ENCODE measurements at regions of chr10 and their contacts with region 1.

Region 1: DNA sequence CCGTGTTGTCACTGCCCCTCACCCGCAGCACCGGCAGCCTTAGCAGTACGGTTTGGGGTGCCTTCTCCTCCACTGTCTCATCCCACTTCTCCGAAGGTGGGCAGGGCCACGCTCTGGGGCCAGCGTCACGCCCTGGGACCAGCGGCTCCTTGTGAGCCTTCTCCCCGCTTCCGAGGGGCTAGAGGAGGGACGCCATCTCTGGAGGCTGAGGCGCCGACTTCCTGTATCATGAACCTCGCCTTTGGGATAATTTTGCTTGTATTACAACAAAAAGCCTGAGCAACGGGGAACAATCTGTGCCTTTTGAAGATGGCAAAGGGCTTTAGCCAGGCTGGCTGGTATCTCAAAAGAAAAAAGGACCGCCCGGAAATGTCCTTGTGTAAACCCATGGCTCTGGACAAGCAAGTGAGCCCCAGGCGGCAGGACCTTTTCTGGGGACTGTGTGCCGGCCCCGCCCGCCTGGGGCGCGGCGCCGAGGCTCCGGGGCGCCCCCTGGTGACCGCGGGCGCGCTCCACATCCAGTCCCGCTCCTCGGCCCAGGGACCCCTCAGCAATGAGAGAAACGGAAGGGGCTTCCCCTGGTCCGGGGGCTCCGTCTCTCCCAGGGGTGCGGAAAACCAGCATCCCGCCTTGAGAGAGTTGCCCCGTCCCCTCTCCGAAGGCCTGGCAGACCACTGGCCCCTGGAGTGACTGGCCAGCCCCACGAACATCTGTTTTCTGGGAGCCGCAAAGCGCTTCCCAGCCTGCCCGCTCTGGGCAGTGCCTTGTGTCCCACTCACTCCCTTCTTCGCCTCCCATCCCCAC is 3.8 kb downstream of the DEPP1 start:
- DNase-seq: peak; percentile 62
- H3K4me3 Mint-ChIP-seq: peak overlapping the region; percentile 49
- H3K27ac Mint-ChIP-seq: peak overlapping the region; percentile 65
- H3K4me1 Mint-ChIP-seq: peaks cover 20% of the 10 kb centered on the region
- H3K27me3 Mint-ChIP-seq: no peaks in the 10 kb centered on the region

Region 2: DNA sequence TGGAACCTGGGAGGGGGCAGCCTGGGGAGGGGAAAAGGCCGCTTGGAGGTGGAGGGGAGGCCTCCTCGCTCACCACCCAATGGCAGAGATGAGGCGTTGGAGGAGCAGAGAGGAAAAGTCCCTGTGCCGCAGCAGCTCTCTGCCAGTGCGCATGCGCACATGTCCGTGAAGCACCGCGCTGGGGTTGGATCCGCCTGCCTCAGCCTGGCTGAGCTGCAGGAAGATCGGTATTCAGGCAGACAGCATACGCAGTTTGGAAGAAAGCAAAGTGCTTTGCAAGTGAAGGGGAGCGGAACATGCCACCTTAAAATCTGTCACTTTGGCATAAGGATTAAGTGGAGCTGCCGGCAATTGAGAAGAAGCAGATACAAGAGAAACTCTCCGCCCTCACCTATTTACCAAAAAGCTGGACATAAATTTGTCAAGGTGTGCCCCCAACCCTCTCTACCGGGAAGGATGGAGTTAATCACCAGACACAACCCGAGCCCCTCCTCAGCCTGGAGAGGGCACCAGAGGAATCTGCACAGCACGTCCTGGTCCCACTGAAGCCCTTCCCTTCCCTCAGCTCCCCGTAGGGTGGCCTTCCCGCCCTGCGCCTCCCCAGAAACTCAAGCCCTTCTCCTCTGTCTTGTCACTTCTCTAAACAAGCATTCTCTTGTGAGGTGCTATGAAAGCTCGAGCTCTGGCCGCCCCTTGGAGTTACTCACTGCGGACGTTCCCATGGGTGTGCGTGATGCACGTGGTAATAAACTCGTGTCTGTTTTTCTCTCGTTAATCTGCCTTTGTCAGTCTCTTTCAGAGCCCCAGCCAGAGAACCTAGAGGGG is 95.9 kb before region 1 on chr10:
- CTCF ChIA-PET with region 1: no interaction called
- intact Hi-C with region 1: loop called (anchors 2 kb)
- DNase-seq: peak; percentile 89
- H3K4me3 Mint-ChIP-seq: peak overlapping the region; percentile 80
- H3K27ac Mint-ChIP-seq: peak overlapping the region; percentile 48
- H3K4me1 Mint-ChIP-seq: peaks cover 9% of the 10 kb centered on the region
- H3K27me3 Mint-ChIP-seq: peaks cover 2% of the 10 kb centered on the region

Region 3: GRCh38 chr10:44913350-44914081 is 61.3 kb before region 1 on chr10:
- CTCF ChIA-PET with region 1: no interaction called
- intact Hi-C with region 1: loop called (anchors 10 kb)
- DNase-seq: peak; percentile 52
- H3K4me3 Mint-ChIP-seq: peak overlapping the region; percentile 20
- H3K27ac Mint-ChIP-seq: peak overlapping the region; percentile 77
- H3K4me1 Mint-ChIP-seq: peaks cover 16% of the 10 kb centered on the region
- H3K27me3 Mint-ChIP-seq: no peaks in the 10 kb centered on the region

Region 4: GRCh38 chr10:44947371-44948152 is 27.3 kb before region 1 on chr10:
- CTCF ChIA-PET with region 1: no interaction called
- intact Hi-C with region 1: no loop called
- DNase-seq: no peak
- H3K4me3 Mint-ChIP-seq: no peak overlapping the region
- H3K27ac Mint-ChIP-seq: no peak overlapping the region
- H3K4me1 Mint-ChIP-seq: no peaks in the 10 kb centered on the region
- H3K27me3 Mint-ChIP-seq: peaks cover 4% of the 10 kb centered on the region

Region 5: DNA sequence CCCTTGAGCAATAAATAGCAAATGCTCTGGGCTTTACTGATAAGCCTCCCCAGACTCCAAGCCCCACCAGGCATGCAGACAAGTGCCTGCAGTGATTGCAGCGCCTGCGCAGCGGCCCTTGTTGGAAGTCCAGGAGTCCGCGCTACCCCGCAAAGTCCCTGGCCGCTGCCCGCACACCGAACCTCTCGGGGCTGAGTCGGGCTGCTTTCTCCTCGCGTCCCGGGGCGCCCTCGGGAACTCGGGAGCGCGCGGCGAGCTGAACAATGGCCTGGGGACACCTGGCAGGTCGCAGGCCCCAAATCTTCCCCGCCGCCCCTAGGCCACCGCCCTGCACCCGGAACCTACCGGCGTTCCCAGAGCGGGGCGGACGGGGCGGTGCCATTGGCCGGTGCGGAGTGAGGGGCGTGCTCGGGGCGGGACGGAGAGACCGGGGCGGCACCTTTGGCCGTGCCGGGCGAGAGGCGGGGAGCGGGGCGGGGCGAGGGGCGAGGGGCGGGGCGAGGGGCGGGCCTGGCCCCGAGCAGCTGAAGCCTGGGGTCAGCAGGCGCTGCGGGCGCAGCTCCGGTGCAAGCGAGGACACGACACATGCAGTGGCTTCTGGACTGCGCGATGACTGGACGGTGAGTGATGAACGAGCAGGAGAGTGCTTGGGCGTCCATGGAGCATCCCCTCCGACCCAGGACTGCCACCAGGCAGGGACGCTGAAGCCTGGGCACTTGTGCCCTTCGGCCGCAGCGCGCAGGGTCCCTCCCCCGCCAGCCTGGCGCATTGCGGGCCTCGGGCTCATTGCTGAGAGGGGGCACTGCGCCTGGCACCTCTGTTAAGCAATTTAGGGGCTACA is 15.4 kb before region 1 on chr10 and contains the start of gene RASSF4:
- CTCF ChIA-PET with region 1: interaction called, 3 read pairs
- intact Hi-C with region 1: loop called (anchors 1 kb)
- DNase-seq: peak; percentile 94
- H3K4me3 Mint-ChIP-seq: peak within 1 kb of the TSS; percentile 80
- H3K27ac Mint-ChIP-seq: peak within 1 kb of the TSS; percentile 48
- H3K4me1 Mint-ChIP-seq: peaks cover 18% of the 10 kb centered on the region
- H3K27me3 Mint-ChIP-seq: no peaks in the 10 kb centered on the region
- total RNA-seq, gene RASSF4: 1.1 to 2.2 TPM

Region 6: GRCh38 chr10:45000752-45001380 is 26.0 kb after region 1 on chr10 and contains the start of gene ZNF22:
- CTCF ChIA-PET with region 1: interaction called, 3 read pairs
- intact Hi-C with region 1: loop called (anchors 2 kb)
- DNase-seq: peak; percentile 65
- H3K4me3 Mint-ChIP-seq: peak within 1 kb of the TSS; percentile 83
- H3K27ac Mint-ChIP-seq: peak within 1 kb of the TSS; percentile 79
- H3K4me1 Mint-ChIP-seq: peaks cover 26% of the 10 kb centered on the region
- H3K27me3 Mint-ChIP-seq: no peaks in the 10 kb centered on the region
- total RNA-seq, gene ZNF22: 18.7 to 19.5 TPM